PC-3 (cell line): ENCODE measurements at regions of chr2 and their contacts with region 1.

Region 1: GRCh38 chr2:20962939-20963557 is 80.8 kb downstream of the APOB start:
- DNase-seq: peak; percentile 77
- ATAC-seq: peak; percentile 74
- H3K4me3 ChIP-seq: no peak overlapping the region
- H3K27ac ChIP-seq: no peak overlapping the region
- H3K4me1 ChIP-seq: no peaks in the 10 kb centered on the region
- H3K27me3 ChIP-seq: peaks cover 40% of the 10 kb centered on the region
- CTCF ChIP-seq: peak; percentile 86

Region 2: DNA sequence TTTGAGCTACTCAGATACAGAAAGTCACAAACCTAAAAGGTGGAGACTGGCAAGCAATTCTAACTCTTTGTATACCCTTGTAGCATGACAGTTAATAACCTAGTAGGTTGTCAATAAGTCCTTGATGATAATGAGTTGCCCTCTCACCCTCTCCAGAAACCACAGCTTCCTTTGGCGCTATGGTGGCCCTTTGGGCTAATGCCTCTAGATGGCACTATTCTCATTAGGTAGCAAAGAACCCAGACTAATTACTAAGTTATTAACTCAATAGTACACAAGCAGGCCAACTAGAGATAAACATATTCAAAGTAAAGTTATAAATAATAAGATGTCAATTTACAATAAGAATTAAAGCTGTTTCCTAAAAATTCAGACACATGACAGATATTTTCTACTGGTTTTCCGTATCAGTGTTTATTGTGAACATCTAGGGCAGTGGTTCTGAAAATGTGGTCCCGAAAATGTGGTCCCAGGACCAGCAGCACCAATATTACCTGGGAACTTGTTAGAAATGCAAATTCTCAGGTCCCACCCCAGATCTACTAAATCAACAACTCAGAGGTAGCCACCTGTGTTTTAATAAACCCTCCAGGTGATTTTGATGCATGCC is 181.3 kb before region 1 on chr2:
- CTCF ChIA-PET with region 1: interaction called, 4 read pairs
- POLR2A ChIA-PET with region 1: no interaction called
- intact Hi-C with region 1: loop called (anchors 1 kb)
- DNase-seq: peak; percentile 63
- ATAC-seq: peak; percentile 65
- H3K4me3 ChIP-seq: no peak overlapping the region
- H3K27ac ChIP-seq: no peak overlapping the region
- H3K4me1 ChIP-seq: no peaks in the 10 kb centered on the region
- H3K27me3 ChIP-seq: peaks cover 52% of the 10 kb centered on the region
- CTCF ChIP-seq: peak; percentile 87